GM10248 (cell line): ENCODE measurements at regions of chr7 and their contacts with region 1.

Region 1: GRCh38 chr7:154613811-154614210 is 389.1 kb downstream of the PAXIP1 start:
- DNase-seq: no peak
- CTCF ChIP-seq: no peak

Region 2: GRCh38 chr7:154627646-154628290 is 14.0 kb after region 1 on chr7:
- CTCF ChIA-PET with region 1: interaction called, 10 read pairs
- POLR2A ChIA-PET with region 1: no interaction called
- DNase-seq: no peak
- CTCF ChIP-seq: no peak